Naive thymus-derived CD4-positive, alpha-beta T cell (primary cell): ENCODE measurements at regions of chr12 and their contacts with region 1.

Region 1: GRCh38 chr12:76559400-76560085 is at the start of gene OSBPL8:
- DNase-seq: peak; percentile 85 to 98 (median 91)
- ATAC-seq: peak; percentile 88
- H3K4me3 ChIP-seq: peak within 1 kb of the TSS; percentile 97
- H3K4me3 Mint-ChIP-seq: peak within 1 kb of the TSS; percentile 88 to 99 (median 96)
- H3K27ac ChIP-seq: peak within 1 kb of the TSS; percentile 96
- H3K27ac Mint-ChIP-seq: peak within 1 kb of the TSS; percentile 91 to 98 (median 98)
- H3K4me1 ChIP-seq: peaks cover 21 to 29% of the 10 kb centered on the region in 2 donors
- H3K4me1 Mint-ChIP-seq: peaks cover 20 to 45% (median 35%) of the 10 kb centered on the region in 7 donors
- H3K27me3 ChIP-seq: no peaks in the 10 kb centered on the region
- H3K27me3 Mint-ChIP-seq: no peaks in the 10 kb centered on the region
- total RNA-seq, gene OSBPL8: 113 to 146 (median 119) TPM

Region 2: GRCh38 chr12:75511116-75512048 is 1048.2 kb before region 1 on chr12 and contains the start of gene KRR1:
- CTCF ChIA-PET with region 1: no interaction called
- POLR2A ChIA-PET with region 1: interaction called, 4 read pairs
- intact Hi-C with region 1: loop called (anchors 1 kb)
- DNase-seq: peak; percentile 60 to 93 (median 90)
- ATAC-seq: peak; percentile 98
- H3K4me3 ChIP-seq: peak within 1 kb of the TSS; percentile 90
- H3K4me3 Mint-ChIP-seq: peak within 1 kb of the TSS; percentile 96 to 100 (median 99)
- H3K27ac ChIP-seq: peak within 1 kb of the TSS; percentile 89
- H3K27ac Mint-ChIP-seq: peak within 1 kb of the TSS; percentile 96 to 100 (median 99)
- H3K4me1 ChIP-seq: peaks cover 13% of the 10 kb centered on the region in 2 donors
- H3K4me1 Mint-ChIP-seq: peaks cover 15 to 47% (median 38%) of the 10 kb centered on the region in 7 donors
- H3K27me3 ChIP-seq: no peaks in the 10 kb centered on the region
- H3K27me3 Mint-ChIP-seq: no peaks in the 10 kb centered on the region
- total RNA-seq, gene KRR1: 69.3 to 120 (median 74.3) TPM

Region 3: GRCh38 chr12:76083904-76084862 is 475.4 kb before region 1 on chr12 and contains the start of gene NAP1L1:
- CTCF ChIA-PET with region 1: no interaction called
- POLR2A ChIA-PET with region 1: interaction called, 10 read pairs
- intact Hi-C with region 1: loop called (anchors 1 kb)
- DNase-seq: peak; percentile 85 to 96 (median 93)
- ATAC-seq: peak; percentile 87
- H3K4me3 ChIP-seq: peak within 1 kb of the TSS; percentile 79
- H3K4me3 Mint-ChIP-seq: peak within 1 kb of the TSS; percentile 91 to 100 (median 98)
- H3K27ac ChIP-seq: peak within 1 kb of the TSS; percentile 100
- H3K27ac Mint-ChIP-seq: peak within 1 kb of the TSS; percentile 84 to 100 (median 99)
- H3K4me1 ChIP-seq: peaks cover 27 to 28% of the 10 kb centered on the region in 2 donors
- H3K4me1 Mint-ChIP-seq: peaks cover 30 to 59% (median 54%) of the 10 kb centered on the region in 7 donors
- H3K27me3 ChIP-seq: no peaks in the 10 kb centered on the region
- H3K27me3 Mint-ChIP-seq: no peaks in the 10 kb centered on the region
- total RNA-seq, gene NAP1L1: 510 to 862 (median 625) TPM

Region 4: GRCh38 chr12:76489737-76490136 is 69.8 kb before region 1 on chr12:
- CTCF ChIA-PET with region 1: no interaction called
- POLR2A ChIA-PET with region 1: interaction called, 4 read pairs
- intact Hi-C with region 1: loop called in 1 of 2 experiments (anchors 5 kb)
- DNase-seq: no peak
- ATAC-seq: no peak
- H3K4me3 ChIP-seq: no peak overlapping the region
- H3K4me3 Mint-ChIP-seq: peak overlapping the region in 2 of 10 donors; percentile 21 to 28
- H3K27ac ChIP-seq: no peak overlapping the region
- H3K27ac Mint-ChIP-seq: peak overlapping the region in 3 of 9 donors; percentile 1 to 40 (median 8)
- H3K4me1 ChIP-seq: no peaks in the 10 kb centered on the region
- H3K4me1 Mint-ChIP-seq: peaks cover 11 to 60% (median 39%) of the 10 kb centered on the region in 7 donors
- H3K27me3 ChIP-seq: no peaks in the 10 kb centered on the region
- H3K27me3 Mint-ChIP-seq: no peaks in the 10 kb centered on the region

Region 5: DNA sequence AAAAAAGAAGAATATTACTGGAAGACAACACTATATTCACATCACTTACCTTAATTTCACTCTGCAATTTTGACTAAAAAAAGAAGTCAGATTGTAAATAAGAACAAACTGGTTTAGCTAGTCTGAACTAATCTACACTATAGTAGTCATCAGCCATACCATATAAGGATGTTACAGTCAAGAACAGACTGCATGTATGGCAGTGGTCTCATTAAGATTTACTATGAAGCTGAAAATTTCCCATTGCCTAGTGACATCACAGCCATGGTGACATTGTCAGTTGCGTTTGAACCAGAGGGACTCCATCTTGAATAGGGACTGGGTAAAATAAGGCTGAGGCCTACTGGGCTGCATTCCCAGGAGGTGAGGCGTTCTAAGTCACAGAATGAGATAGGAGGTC is 51.4 kb before region 1 on chr12:
- CTCF ChIA-PET with region 1: no interaction called
- POLR2A ChIA-PET with region 1: no interaction called
- intact Hi-C with region 1: no loop called
- DNase-seq: no peak
- ATAC-seq: peak; percentile 21
- H3K4me3 ChIP-seq: no peak overlapping the region
- H3K4me3 Mint-ChIP-seq: peak overlapping the region in 1 of 10 donors; percentile 51
- H3K27ac ChIP-seq: no peak overlapping the region
- H3K27ac Mint-ChIP-seq: peak overlapping the region in 1 of 9 donors; percentile 26
- H3K4me1 ChIP-seq: no peaks in the 10 kb centered on the region
- H3K4me1 Mint-ChIP-seq: peaks cover 5 to 58% (median 48%) of the 10 kb centered on the region in 7 donors
- H3K27me3 ChIP-seq: no peaks in the 10 kb centered on the region
- H3K27me3 Mint-ChIP-seq: no peaks in the 10 kb centered on the region

Region 6: DNA sequence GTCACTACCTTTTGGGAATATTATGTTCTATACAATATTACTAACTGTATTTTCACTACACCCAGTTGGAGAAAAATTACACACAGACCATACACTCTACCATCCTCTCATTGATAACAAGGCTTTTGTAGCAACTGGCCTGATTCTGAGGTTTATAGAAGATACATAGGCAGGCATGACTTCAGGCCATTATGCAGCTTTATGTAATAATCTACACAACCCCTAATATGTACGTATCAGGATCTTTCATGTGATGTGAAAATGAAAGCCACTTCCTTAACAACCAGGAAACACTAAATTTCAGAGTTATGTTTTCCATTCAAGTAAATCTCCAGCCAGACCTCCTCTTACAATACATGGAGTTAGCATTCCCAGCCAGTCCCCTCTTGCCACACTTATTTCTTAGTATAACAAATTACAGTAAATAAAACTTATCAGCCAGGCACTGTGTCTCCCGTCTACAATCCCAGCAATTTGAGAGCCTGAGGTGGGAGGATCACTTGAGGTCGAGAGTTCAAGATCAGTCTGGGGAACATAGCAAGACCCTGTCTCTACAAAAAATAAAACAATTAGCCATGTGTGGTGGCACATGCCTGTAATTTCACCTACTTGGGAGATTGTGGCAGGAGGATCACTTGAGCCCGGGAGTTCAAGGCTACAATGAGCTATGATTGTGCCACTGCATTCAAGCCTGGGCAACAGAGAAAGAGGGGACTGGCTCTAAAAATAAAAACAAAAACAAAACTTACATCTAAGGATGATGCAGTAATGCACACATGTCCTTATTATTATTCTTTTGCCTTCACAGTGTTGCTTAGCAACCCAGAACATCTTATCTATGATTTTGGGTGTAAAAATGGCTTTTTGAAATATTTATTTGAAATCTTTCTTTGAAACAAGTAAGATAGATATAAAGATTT is 10.4 kb after region 1 on chr12:
- CTCF ChIA-PET with region 1: no interaction called
- POLR2A ChIA-PET with region 1: interaction called, 10 read pairs
- intact Hi-C with region 1: loop called (anchors 1 kb)
- DNase-seq: peak in 5 of 9 donors; percentile 23 to 49 (median 44)
- ATAC-seq: peak; percentile 74
- H3K4me3 ChIP-seq: no peak overlapping the region
- H3K4me3 Mint-ChIP-seq: peak overlapping the region in 8 of 10 donors; percentile 0 to 64 (median 24)
- H3K27ac ChIP-seq: no peak overlapping the region
- H3K27ac Mint-ChIP-seq: peak overlapping the region in 7 of 9 donors; percentile 16 to 73 (median 55)
- H3K4me1 ChIP-seq: peaks cover 0 to 8% of the 10 kb centered on the region in 2 donors
- H3K4me1 Mint-ChIP-seq: peaks cover 6 to 11% (median 8%) of the 10 kb centered on the region in 7 donors
- H3K27me3 ChIP-seq: no peaks in the 10 kb centered on the region
- H3K27me3 Mint-ChIP-seq: no peaks in the 10 kb centered on the region

Region 7: GRCh38 chr12:77065361-77066204 is 506.0 kb after region 1 on chr12 and contains the start of gene E2F7:
- CTCF ChIA-PET with region 1: no interaction called
- POLR2A ChIA-PET with region 1: no interaction called
- intact Hi-C with region 1: loop called in 1 of 2 experiments (anchors 2 kb)
- DNase-seq: peak; percentile 47 to 93 (median 69)
- ATAC-seq: peak; percentile 91
- H3K4me3 ChIP-seq: peak within 1 kb of the TSS; percentile 63
- H3K4me3 Mint-ChIP-seq: peak within 1 kb of the TSS; percentile 79 to 88 (median 85)
- H3K27ac ChIP-seq: no peak within 1 kb of the TSS
- H3K27ac Mint-ChIP-seq: peak within 1 kb of the TSS in 2 of 9 donors; percentile 69 to 80
- H3K4me1 ChIP-seq: peaks cover 0 to 7% of the 10 kb centered on the region in 2 donors
- H3K4me1 Mint-ChIP-seq: peaks cover 5 to 41% (median 8%) of the 10 kb centered on the region in 7 donors
- H3K27me3 ChIP-seq: no peaks in the 10 kb centered on the region
- H3K27me3 Mint-ChIP-seq: peaks cover 16 to 38% (median 30%) of the 10 kb centered on the region in 5 donors
- total RNA-seq, gene E2F7: 0.22 to 17.6 TPM in 2 of 5 experiments, not detected in the others